ENCODE measurements at regions of chr10 and their contacts with region 1.

Region 1: GRCh38 chr10:3226960-3227744 is 54.6 kb upstream of the PITRM1 start:
- DNase-seq: no peak
- H3K4me3 Mint-ChIP-seq: no peak overlapping the region
- H3K27ac Mint-ChIP-seq: no peak overlapping the region
- H3K4me1 Mint-ChIP-seq: peaks cover 18% of the 10 kb centered on the region
- H3K27me3 Mint-ChIP-seq: peaks cover 18% of the 10 kb centered on the region

Region 2: GRCh38 chr10:2445370-2445769 is 781.8 kb before region 1 on chr10:
- intact Hi-C with region 1: no loop called
- DNase-seq: no peak
- H3K4me3 Mint-ChIP-seq: no peak overlapping the region
- H3K27ac Mint-ChIP-seq: no peak overlapping the region
- H3K4me1 Mint-ChIP-seq: no peaks in the 10 kb centered on the region
- H3K27me3 Mint-ChIP-seq: peaks cover 2% of the 10 kb centered on the region

Region 3: GRCh38 chr10:3197348-3198003 is 29.7 kb before region 1 on chr10:
- intact Hi-C with region 1: loop called (anchors 1 kb)
- DNase-seq: peak; percentile 76
- H3K4me3 Mint-ChIP-seq: peak overlapping the region; percentile 37
- H3K27ac Mint-ChIP-seq: peak overlapping the region; percentile 57
- H3K4me1 Mint-ChIP-seq: peaks cover 24% of the 10 kb centered on the region
- H3K27me3 Mint-ChIP-seq: peaks cover 82% of the 10 kb centered on the region

Region 4: DNA sequence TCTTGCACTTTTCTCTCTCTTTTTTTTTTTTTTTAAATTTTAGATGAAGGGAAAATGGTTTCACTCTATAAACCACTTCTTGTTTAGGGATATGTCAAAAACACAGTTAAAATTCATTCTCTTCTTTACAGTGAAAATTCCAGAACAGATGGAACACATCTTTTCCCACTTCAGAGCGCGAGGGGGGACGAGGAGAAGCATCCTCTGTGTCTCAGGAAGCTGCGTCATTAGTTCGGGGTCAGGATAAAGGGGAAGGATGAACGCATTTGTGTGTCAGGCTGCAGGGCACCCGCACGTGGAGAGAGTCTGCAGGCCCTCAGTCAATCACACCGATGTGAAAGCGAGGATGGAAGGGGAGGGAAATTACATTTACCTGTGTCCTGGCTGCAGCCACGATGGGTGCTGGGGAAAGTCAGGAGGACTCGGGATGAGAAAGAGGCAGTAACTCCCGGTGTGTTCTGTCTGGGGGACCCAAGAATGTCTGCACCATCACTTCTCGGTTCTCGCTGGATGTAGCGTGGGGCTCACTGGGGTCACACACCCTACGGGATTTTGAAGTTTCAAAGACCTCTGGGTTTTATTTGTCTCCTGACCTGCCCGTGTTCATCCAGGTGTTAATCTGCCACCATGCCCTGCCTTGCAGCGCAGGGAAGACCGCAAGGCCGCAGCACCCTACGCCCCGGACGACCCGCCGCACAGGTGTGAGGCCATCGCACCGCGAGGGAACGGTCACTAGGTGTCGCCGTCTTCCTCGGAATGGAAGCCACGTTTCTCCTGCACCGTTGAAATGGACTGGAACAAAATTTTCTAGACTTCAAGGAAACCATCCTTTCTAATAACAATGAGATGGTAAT is 12.1 kb after region 1 on chr10:
- intact Hi-C with region 1: no loop called
- DNase-seq: peak; percentile 54
- H3K4me3 Mint-ChIP-seq: no peak overlapping the region
- H3K27ac Mint-ChIP-seq: no peak overlapping the region
- H3K4me1 Mint-ChIP-seq: no peaks in the 10 kb centered on the region
- H3K27me3 Mint-ChIP-seq: peaks cover 48% of the 10 kb centered on the region

Region 5: DNA sequence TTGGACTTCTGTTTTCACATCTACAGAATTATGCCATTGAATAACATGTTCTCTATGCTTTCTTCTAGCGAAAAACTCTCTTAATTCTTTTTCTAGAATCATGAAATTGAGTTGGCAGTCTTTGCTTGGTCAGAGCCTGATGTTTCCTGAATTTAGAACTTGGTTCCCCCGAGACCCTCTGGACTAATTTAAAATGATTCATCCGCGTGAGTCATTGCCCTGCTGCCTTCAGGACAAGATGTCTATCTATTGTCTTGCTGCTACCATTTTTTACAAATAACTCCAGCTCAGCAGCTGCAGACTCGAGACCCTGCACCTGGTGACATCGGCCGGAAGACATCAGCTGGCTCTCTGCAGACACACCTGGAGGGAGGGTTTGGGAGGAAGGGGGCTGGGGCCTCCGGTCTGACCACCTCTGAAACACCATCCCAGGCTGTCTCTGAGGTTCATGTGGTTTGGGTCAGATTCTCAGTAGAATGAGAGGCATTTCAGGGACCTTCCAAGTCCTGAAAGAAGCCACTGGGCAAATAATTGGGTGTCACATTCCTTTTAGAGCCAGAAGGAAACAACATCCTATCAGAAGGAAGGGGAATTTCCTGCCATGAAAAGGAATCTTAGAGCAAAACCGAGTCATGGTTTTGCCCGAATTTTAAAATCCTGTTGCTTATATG is 578.8 kb after region 1 on chr10:
- intact Hi-C with region 1: loop called (anchors 2 kb)
- DNase-seq: no peak
- H3K4me3 Mint-ChIP-seq: peak overlapping the region; percentile 70
- H3K27ac Mint-ChIP-seq: peak overlapping the region; percentile 99
- H3K4me1 Mint-ChIP-seq: peaks cover 76% of the 10 kb centered on the region
- H3K27me3 Mint-ChIP-seq: no peaks in the 10 kb centered on the region

Region 6: GRCh38 chr10:4241724-4242345 is 1014.7 kb after region 1 on chr10:
- intact Hi-C with region 1: loop called (anchors 1 kb)
- DNase-seq: no peak
- H3K4me3 Mint-ChIP-seq: no peak overlapping the region
- H3K27ac Mint-ChIP-seq: no peak overlapping the region
- H3K4me1 Mint-ChIP-seq: peaks cover 43% of the 10 kb centered on the region
- H3K27me3 Mint-ChIP-seq: peaks cover 2% of the 10 kb centered on the region

Region 7: DNA sequence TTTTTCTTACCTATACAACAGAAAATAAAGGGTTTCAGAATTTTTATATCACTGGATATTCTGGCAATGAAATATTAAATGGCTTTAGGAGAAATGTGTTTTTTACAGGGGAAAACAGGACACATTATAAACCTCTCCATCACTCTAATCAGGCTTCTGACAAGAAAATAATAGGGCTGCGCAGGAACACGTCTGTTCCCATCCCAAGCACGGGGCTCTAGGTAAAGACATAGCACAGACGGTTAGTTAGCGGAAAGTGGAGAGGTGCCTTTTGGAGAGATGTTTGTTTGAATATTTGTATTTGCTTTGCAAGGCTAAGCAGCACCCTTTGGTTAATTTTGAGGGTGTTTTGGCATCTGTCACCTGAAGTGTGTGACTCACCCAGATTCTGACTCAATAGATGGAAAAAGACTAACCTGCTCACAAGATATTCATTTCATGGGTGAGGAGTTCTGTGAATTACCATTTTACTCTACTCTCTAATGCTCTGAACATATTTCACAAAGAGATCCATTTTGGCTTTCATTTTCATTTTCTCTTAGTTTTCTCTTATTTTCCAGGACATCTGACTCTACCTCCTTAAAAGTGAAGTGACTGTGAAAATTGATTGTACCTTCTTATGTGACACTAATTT is 1424.4 kb after region 1 on chr10:
- intact Hi-C with region 1: loop called (anchors 2 kb)
- DNase-seq: no peak
- H3K4me3 Mint-ChIP-seq: peak overlapping the region; percentile 8
- H3K27ac Mint-ChIP-seq: peak overlapping the region; percentile 85
- H3K4me1 Mint-ChIP-seq: peaks cover 32% of the 10 kb centered on the region
- H3K27me3 Mint-ChIP-seq: peaks cover 3% of the 10 kb centered on the region